Endothelial cell of umbilical vein (primary cell): ENCODE measurements at regions of chr15 and their contacts with region 1.

Region 1: DNA sequence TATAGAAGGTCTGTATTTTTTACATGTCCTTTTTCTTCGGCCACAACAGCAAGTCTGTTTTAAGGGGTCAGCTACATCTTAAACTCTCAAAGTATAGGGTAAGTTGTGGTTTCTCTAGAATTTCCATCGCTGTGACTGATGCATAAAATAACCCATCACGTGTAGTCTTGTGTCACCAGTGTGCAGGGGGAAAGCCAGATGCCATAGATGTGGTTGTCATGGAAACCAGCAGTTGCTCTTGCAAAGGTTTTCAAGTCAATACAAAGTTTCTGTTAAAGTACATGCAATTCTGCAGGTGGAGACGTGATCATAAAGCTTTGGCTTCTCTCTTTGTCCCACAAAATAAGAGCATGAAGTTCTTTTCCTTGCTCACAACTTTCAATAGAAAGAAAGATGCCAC is 210.3 kb upstream of the ONECUT1 start:
- DNase-seq: no peak
- H3K4me3 ChIP-seq: no peak overlapping the region
- H3K27ac ChIP-seq: no peak overlapping the region
- H3K4me1 ChIP-seq: no peaks in the 10 kb centered on the region
- H3K27me3 ChIP-seq: no peaks in the 10 kb centered on the region
- CTCF ChIP-seq: no peak
- POLR2A ChIP-seq: no peak

Region 2: DNA sequence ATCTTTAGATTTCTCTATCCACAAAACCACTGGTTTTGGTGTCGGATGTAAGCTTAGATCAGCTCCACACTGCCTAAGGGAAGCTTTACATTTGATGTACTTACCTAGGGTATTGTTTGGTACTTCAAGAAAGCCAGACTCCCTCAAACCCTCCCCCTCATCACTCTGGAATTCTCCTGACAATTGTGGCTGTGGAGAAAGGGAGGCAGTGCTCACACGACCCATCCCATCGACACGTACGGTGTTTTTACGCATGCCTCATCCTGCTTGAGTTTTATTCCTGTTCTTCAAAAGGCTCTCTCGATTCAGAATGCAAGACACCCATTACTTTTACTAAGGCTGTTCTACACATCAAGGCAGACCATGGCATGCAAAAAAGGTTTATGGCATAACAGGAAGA is 142.9 kb before region 1 on chr15:
- CTCF ChIA-PET with region 1: no interaction called
- POLR2A ChIA-PET with region 1: interaction called, 13 read pairs
- dilution Hi-C with region 1: no loop called
- intact Hi-C with region 1: no loop called
- DNase-seq: no peak
- H3K4me3 ChIP-seq: no peak overlapping the region
- H3K27ac ChIP-seq: no peak overlapping the region
- H3K4me1 ChIP-seq: no peaks in the 10 kb centered on the region
- H3K27me3 ChIP-seq: no peaks in the 10 kb centered on the region
- CTCF ChIP-seq: no peak
- POLR2A ChIP-seq: no peak

Region 3: DNA sequence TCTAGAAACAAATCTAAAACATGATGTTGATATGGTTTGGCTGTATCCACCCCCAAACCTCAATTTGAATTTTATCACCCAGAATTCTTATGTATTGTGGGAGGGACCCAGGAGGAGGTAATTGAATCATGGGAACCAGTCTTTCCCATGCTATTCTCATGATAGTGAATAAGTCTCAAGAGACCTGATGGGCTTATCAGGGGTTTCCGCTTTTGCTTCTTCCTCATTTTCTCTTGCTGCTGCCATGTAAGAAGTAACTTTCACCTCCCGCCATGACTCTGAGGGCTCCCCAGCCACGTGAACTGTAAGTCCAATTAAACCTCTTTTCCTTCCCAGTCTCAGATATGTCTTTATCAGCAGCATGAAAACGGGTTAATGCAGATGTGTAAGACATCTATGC is 22.4 kb after region 1 on chr15:
- CTCF ChIA-PET with region 1: no interaction called
- POLR2A ChIA-PET with region 1: no interaction called
- dilution Hi-C with region 1: no loop called
- intact Hi-C with region 1: no loop called
- DNase-seq: no peak
- H3K4me3 ChIP-seq: no peak overlapping the region
- H3K27ac ChIP-seq: no peak overlapping the region
- H3K4me1 ChIP-seq: no peaks in the 10 kb centered on the region
- H3K27me3 ChIP-seq: no peaks in the 10 kb centered on the region
- CTCF ChIP-seq: no peak
- POLR2A ChIP-seq: no peak

Region 4: GRCh38 chr15:53059273-53060043 is 59.0 kb after region 1 on chr15:
- CTCF ChIA-PET with region 1: no interaction called
- POLR2A ChIA-PET with region 1: no interaction called
- dilution Hi-C with region 1: no loop called
- intact Hi-C with region 1: no loop called
- DNase-seq: no peak
- H3K4me3 ChIP-seq: no peak overlapping the region
- H3K27ac ChIP-seq: no peak overlapping the region
- H3K4me1 ChIP-seq: no peaks in the 10 kb centered on the region
- H3K27me3 ChIP-seq: no peaks in the 10 kb centered on the region
- CTCF ChIP-seq: no peak
- POLR2A ChIP-seq: no peak

Region 5: DNA sequence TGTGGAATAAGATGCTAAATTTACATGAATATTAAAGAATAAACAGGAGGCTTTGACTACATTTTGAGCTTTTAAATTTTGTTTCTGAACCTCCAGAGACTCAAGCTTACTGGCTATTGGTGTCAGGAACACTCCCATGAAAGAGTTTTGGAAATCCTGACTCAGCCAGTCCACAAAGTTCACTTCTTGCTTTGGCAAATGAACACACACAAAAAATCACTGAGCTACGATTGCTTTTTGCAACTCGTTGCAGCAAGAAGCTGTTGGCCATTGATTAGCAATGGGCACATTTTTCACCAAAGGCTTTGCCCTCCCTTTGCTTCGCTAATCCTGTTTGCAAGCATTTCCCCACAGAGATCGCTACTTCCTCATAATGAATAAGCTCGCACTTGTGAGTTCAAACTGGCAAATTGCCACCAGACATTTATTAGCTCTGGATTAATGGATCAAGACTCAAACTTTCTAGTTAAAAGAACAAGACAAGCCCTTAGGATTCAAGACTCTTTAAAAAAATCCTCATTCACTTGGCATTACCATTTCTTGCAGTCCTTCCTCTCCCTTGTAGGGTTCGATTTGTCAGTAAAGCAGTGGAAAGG is 132.9 kb after region 1 on chr15:
- CTCF ChIA-PET with region 1: no interaction called
- POLR2A ChIA-PET with region 1: no interaction called
- dilution Hi-C with region 1: no loop called
- intact Hi-C with region 1: no loop called
- DNase-seq: no peak
- H3K4me3 ChIP-seq: no peak overlapping the region
- H3K27ac ChIP-seq: no peak overlapping the region
- H3K4me1 ChIP-seq: no peaks in the 10 kb centered on the region
- H3K27me3 ChIP-seq: no peaks in the 10 kb centered on the region
- CTCF ChIP-seq: no peak
- POLR2A ChIP-seq: no peak